ENCODE measurements at regions of chr17 and their contacts with region 1.

Region 1: DNA sequence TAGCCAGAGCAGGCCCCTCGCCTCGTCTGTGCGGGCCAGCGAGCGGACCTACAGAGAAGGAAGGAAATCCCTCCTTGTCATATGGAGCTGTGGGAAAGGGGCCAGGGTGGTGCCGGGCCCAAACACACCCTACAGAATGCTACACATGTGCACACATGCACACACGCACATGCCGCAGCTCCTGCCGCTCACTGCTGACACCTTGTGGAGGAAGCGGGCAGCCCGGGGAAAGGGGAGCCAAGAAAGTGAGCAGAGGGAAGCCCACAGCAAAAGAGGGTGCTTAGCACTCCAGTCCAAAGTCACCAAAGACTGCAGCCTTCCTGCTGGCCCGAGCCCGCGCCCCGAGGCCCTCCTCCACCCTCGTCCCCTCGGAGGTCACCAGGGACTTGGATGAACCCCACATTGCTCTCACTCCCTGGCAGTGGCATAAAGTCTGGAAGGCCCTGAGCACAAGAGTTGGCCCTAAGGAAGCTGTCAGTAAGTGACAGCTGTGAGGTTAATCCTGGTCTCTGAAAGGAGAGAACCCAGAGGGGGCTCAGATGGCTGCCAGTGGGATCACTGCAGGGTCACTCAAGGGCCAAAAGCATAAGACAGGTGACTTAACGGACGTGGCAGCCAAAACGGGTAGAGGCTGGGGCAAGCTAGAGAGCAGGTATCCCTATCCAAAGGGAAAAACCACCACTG is 68.2 kb downstream of the MYO18A start:
- DNase-seq: peak in 1 of 2 donors; percentile 70
- ATAC-seq: peak; percentile 78

Region 2: DNA sequence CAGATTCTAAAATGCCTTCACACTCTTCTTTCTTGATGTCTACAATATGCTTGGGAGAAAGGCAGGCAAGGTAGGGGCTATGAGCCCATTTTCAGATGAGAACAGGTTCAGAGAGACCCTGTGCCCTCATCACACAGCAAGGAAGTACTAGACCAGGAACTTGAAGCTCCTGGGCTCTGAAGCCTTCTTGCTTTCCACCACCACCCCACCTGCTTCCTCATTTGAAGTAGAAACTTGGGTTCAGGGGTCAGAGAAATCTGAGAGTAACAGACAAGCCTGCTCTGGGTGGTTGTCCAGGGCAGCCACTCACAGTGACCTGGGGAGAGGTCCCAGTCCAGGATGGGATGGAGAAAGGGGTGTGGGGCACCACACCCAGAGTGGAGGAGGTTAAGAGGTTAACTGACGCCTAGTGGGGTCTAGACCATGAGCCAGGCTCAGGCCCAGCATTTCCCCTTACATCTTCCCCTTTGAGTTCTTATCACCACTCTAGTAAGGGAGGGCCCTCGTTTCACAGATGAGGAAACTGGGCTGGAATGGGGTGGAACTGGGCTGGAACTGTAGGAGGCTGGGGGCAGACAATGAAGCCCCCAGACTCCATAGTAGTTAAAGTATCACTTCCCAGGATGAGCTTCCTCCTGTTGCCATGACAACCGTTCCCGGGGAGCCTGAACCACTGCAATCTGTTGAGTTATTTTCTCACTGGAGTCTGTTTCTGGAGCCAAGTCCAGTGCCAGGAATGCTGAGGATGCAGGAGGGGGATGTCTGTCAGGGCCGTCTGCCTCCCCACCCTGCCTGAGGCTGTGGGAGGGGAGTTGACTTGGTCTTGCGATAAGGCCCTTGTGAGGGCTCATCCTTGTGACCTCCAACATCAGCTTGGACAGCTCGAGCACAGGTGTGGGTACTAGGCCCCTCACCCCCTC is 144.5 kb before region 1 on chr17:
- intact Hi-C with region 1: loop called (anchors 5 kb)
- DNase-seq: no peak
- ATAC-seq: no peak

Region 3: GRCh38 chr17:28983286-28984230 is 128.4 kb before region 1 on chr17:
- intact Hi-C with region 1: no loop called
- DNase-seq: no peak
- ATAC-seq: no peak

Region 4: GRCh38 chr17:29807520-29808351 is 695.8 kb after region 1 on chr17:
- intact Hi-C with region 1: no loop called
- DNase-seq: peak; percentile 49 to 72
- ATAC-seq: peak; percentile 81

Measured in left colon (tissue), 2 donors.